ENCODE measurements at regions of chr21 and their contacts with region 1.

Region 1: GRCh38 chr21:31098576-31099005 is 60.3 kb upstream of the KRTAP19-8 start:
- DNase-seq: peak; percentile 11 to 26
- ATAC-seq: peak in 1 of 2 donors; percentile 21
- H3K4me3 ChIP-seq: no peak overlapping the region
- H3K27ac ChIP-seq: no peak overlapping the region
- H3K4me1 ChIP-seq: no peaks in the 10 kb centered on the region
- H3K27me3 ChIP-seq: peaks cover 0 to 5% (median 0%) of the 10 kb centered on the region in 3 donors
- CTCF ChIP-seq: peak; percentile 28 to 71 (median 58)
- POLR2A ChIP-seq: no peak

Region 2: DNA sequence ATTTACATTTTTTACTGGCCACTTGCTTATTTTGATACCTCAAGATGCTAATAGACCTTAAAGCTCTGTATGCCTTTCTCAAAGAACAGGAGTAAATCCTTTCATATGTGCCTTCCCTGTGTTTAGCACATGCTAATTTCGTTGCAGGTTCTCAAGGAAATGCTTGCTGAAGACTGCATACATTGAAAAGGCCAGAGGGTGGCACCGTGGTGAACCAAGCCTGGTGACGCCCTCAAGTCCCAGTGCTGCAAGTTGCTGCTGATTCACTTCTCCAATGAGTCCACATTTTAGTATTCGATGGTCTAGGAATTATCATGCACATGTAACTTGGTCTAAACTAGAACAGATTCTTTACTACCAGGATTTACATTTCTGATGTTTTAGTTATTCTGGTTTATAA is 1026.1 kb before region 1 on chr21:
- in situ Hi-C with region 1: loop called in 1 of 4 experiments (anchors 25 kb)
- intact Hi-C with region 1: no loop called
- DNase-seq: no peak
- ATAC-seq: no peak
- H3K4me3 ChIP-seq: no peak overlapping the region
- H3K27ac ChIP-seq: no peak overlapping the region
- H3K4me1 ChIP-seq: no peaks in the 10 kb centered on the region
- H3K27me3 ChIP-seq: no peaks in the 10 kb centered on the region
- CTCF ChIP-seq: no peak
- POLR2A ChIP-seq: no peak

Region 3: DNA sequence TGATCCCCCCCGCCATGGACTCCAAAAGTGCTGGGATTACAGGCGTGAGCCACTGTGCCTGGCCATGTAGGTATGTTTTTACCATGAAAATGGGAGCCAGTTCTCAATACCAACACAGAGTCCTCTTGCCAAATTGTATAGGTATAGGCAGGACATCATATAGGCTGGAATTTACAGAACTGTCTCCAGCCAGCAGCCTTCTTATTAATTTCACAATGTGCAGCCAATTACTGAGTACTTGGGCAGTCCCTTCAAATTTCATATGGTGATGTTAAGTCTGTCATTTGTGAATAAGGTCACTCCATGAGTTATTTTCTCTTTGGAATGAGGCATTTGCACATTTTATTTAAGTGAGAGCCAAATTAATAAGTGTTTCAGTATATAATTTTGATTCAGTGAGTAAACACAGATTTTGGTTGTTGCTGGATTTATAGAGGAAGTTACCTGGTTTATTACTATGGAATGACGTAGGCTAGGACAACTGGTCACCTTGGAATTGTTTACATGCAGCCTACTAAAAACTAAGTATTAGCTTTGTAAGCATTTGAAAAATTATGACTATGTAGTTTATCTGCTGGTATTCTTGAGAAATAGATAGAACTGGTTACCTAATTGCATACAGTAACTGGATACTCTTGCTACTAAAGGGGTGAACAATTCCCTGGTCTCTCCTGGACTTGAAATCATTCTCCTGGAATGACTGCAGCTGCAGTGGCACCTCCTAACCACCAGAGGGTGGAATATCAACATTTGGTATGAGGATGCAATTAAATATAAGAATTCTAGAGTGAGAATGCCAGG is 758.0 kb before region 1 on chr21:
- in situ Hi-C with region 1: loop called in 2 of 4 experiments (anchors 25 kb)
- intact Hi-C with region 1: no loop called
- DNase-seq: no peak
- ATAC-seq: no peak
- H3K4me3 ChIP-seq: no peak overlapping the region
- H3K27ac ChIP-seq: no peak overlapping the region
- H3K4me1 ChIP-seq: no peaks in the 10 kb centered on the region
- H3K27me3 ChIP-seq: no peaks in the 10 kb centered on the region
- CTCF ChIP-seq: peak in 4 of 5 experiments; percentile 33 to 50 (median 38)
- POLR2A ChIP-seq: no peak

Region 4: GRCh38 chr21:31580866-31581276 is 482.3 kb after region 1 on chr21:
- in situ Hi-C with region 1: loop called in 1 of 4 experiments (anchors 25 kb)
- intact Hi-C with region 1: no loop called
- DNase-seq: peak in 1 of 2 donors; percentile 30
- ATAC-seq: peak in 1 of 2 donors; percentile 19
- H3K4me3 ChIP-seq: no peak overlapping the region
- H3K27ac ChIP-seq: no peak overlapping the region
- H3K4me1 ChIP-seq: no peaks in the 10 kb centered on the region
- H3K27me3 ChIP-seq: peaks cover 0 to 2% (median 0%) of the 10 kb centered on the region in 3 donors
- CTCF ChIP-seq: peak in 4 of 5 experiments; percentile 27 to 58 (median 46)
- POLR2A ChIP-seq: no peak

Region 5: DNA sequence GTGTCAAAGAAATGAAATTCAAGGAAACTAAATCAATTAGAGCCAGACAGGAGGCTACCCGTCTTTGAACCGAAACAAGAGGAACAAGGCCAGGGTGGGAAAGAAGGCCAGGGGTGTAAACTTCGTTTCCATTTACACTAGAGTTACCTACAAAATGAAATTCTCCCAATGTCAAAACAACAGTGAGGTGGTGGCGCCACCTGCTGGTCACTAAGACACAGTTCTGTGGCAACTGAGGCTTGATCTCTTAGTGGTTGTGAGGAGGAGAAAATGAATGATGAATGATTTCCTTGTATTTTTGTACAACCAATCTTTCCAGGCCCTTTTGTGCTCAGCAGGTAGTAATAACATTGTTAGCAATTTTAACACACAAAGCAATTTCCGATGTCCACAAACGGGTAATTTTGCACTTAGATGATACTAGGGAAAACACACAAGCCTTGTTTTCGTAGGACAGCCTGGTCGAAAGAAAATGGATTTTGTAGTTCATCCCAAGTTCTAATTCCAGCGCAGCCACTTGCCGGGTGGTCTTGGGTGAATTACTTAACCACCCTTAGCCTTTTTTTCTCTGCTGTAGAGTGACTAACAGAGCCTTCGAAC is 506.1 kb after region 1 on chr21:
- in situ Hi-C with region 1: loop called in 3 of 4 experiments (anchors 10 to 25 kb)
- intact Hi-C with region 1: loop called (anchors 10 kb)
- DNase-seq: peak; percentile 6 to 17
- ATAC-seq: no peak
- H3K4me3 ChIP-seq: no peak overlapping the region
- H3K27ac ChIP-seq: no peak overlapping the region
- H3K4me1 ChIP-seq: no peaks in the 10 kb centered on the region
- H3K27me3 ChIP-seq: no peaks in the 10 kb centered on the region
- CTCF ChIP-seq: peak; percentile 59 to 79 (median 69)
- POLR2A ChIP-seq: no peak

Measured in gastrocnemius medialis (tissue), 4 donors.